ENCODE measurements at regions of chr9 and their contacts with region 1.

Region 1: GRCh38 chr9:34178520-34179212 is at the start of gene UBAP1:
- DNase-seq: peak; percentile 89 to 98 (median 95)
- ATAC-seq: peak; percentile 98
- H3K4me3 ChIP-seq: peak within 1 kb of the TSS; percentile 88 to 93
- H3K4me3 Mint-ChIP-seq: peak within 1 kb of the TSS; percentile 97
- H3K27ac ChIP-seq: peak within 1 kb of the TSS; percentile 92 to 96
- H3K27ac Mint-ChIP-seq: peak within 1 kb of the TSS; percentile 98
- H3K4me1 ChIP-seq: peaks cover 9% of the 10 kb centered on the region
- H3K4me1 Mint-ChIP-seq: peaks cover 24% of the 10 kb centered on the region
- H3K27me3 ChIP-seq: no peaks in the 10 kb centered on the region
- H3K27me3 Mint-ChIP-seq: no peaks in the 10 kb centered on the region
- CTCF ChIP-seq: no peak
- total RNA-seq, gene UBAP1: 70.9 to 73.2 TPM

Region 2: DNA sequence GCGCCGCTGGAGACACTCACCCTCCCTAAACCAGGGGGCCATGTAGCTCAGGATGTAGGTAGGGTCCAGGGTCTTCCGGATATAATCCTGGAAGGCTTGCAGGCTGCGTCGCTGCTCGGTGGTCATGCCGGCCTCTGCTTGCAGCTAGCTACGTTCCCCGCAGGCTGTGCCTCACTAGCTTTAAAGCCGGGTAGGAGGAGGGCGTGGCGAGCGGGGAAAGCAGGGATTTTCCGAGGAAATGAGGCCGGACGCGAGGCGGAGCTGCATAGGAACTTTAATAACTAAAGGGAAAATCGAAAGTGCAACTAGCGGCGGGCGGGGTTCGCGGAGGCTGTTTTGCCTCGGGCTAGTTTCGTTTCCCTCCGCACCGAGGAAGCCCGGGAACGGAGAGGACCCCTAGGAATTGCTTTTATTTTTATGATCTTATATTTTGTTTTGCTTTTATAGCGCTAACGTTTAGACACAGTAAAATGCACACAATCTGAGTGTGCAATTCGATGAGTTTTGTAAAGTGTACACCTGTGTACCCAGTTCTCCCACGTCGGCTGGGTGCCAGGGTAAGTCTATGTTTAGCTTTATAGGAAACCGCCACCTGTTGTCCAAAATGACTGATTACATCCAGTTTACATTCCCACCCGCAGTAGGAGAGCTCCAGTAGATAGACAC is 1652.5 kb before region 1 on chr9 and contains the start of gene RIGI:
- CTCF ChIA-PET with region 1: no interaction called
- POLR2A ChIA-PET with region 1: no interaction called
- intact Hi-C with region 1: loop called in 1 of 2 experiments (anchors 5 kb)
- DNase-seq: peak; percentile 47 to 94 (median 80)
- ATAC-seq: peak; percentile 79
- H3K4me3 ChIP-seq: peak within 1 kb of the TSS; percentile 79 to 85
- H3K4me3 Mint-ChIP-seq: peak within 1 kb of the TSS; percentile 98
- H3K27ac ChIP-seq: peak within 1 kb of the TSS; percentile 85 to 86
- H3K27ac Mint-ChIP-seq: peak within 1 kb of the TSS; percentile 98
- H3K4me1 ChIP-seq: peaks cover 22% of the 10 kb centered on the region
- H3K4me1 Mint-ChIP-seq: peaks cover 55% of the 10 kb centered on the region
- H3K27me3 ChIP-seq: no peaks in the 10 kb centered on the region
- H3K27me3 Mint-ChIP-seq: no peaks in the 10 kb centered on the region
- CTCF ChIP-seq: peak; percentile 60
- total RNA-seq, gene RIGI: 3.4 to 3.9 TPM

Region 3: DNA sequence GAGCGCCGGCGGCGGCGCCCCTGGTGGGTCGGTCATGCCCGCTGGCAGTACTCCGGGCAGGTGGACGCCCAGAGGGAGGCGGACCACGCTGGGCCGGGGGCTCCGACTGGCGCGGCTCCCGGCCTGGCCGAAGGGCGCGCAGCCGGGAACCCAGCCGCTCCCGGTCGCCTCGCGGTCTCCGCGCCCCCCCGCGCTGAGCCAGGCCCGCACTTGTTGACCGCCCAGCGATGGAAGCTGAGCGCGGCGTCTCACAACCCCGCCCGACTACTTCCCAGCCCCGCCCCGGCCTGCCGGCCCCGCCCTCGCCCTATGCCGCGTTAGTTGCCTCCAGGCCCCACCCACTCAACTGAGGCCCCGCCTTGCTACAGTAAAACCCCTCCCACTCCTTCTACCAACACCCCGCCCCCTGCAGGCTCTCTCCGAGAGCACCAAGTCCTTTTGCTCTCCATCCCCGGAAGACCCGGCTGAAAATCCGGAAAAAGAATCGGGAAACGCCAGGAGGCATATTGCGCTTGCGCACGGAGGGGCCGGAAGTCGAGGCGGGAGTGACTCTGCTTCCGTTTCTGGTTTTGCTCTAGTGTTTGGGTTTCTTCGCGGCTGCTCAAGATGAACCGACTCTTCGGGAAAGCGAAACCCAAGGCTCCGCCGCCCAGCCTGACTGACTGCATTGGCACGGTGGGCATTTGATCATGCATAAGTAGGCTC is 914.0 kb before region 1 on chr9 and contains the starts of genes BAG1 and CHMP5:
- CTCF ChIA-PET with region 1: no interaction called
- POLR2A ChIA-PET with region 1: no interaction called
- intact Hi-C with region 1: loop called (anchors 5 to 10 kb)
- DNase-seq: peak; percentile 99 to 100 (median 100)
- ATAC-seq: peak; percentile 97
- H3K4me3 ChIP-seq: peak within 1 kb of the TSS; percentile 69 to 98
- H3K4me3 Mint-ChIP-seq: peak within 1 kb of the TSS; percentile 96
- H3K27ac ChIP-seq: peak within 1 kb of the TSS; percentile 74 to 94
- H3K27ac Mint-ChIP-seq: peak within 1 kb of the TSS; percentile 97
- H3K4me1 ChIP-seq: peaks cover 21% of the 10 kb centered on the region
- H3K4me1 Mint-ChIP-seq: peaks cover 62% of the 10 kb centered on the region
- H3K27me3 ChIP-seq: no peaks in the 10 kb centered on the region
- H3K27me3 Mint-ChIP-seq: no peaks in the 10 kb centered on the region
- CTCF ChIP-seq: no peak
- total RNA-seq, gene BAG1: 56.8 to 64.3 TPM
- total RNA-seq, gene CHMP5: 13.4 to 14.2 TPM

Region 4: GRCh38 chr9:34126207-34127034 is 52.2 kb before region 1 on chr9 and contains the start of gene DCAF12:
- CTCF ChIA-PET with region 1: no interaction called
- POLR2A ChIA-PET with region 1: interaction called, 8 read pairs
- intact Hi-C with region 1: loop called (anchors 1 to 2 kb)
- DNase-seq: peak; percentile 82 to 96 (median 90)
- ATAC-seq: peak; percentile 96
- H3K4me3 ChIP-seq: peak within 1 kb of the TSS; percentile 89 to 96
- H3K4me3 Mint-ChIP-seq: peak within 1 kb of the TSS; percentile 98
- H3K27ac ChIP-seq: peak within 1 kb of the TSS; percentile 79 to 92
- H3K27ac Mint-ChIP-seq: peak within 1 kb of the TSS; percentile 97
- H3K4me1 ChIP-seq: peaks cover 39% of the 10 kb centered on the region
- H3K4me1 Mint-ChIP-seq: peaks cover 49% of the 10 kb centered on the region
- H3K27me3 ChIP-seq: no peaks in the 10 kb centered on the region
- H3K27me3 Mint-ChIP-seq: no peaks in the 10 kb centered on the region
- CTCF ChIP-seq: no peak
- total RNA-seq, gene DCAF12: 4.0 to 4.1 TPM

Region 5: DNA sequence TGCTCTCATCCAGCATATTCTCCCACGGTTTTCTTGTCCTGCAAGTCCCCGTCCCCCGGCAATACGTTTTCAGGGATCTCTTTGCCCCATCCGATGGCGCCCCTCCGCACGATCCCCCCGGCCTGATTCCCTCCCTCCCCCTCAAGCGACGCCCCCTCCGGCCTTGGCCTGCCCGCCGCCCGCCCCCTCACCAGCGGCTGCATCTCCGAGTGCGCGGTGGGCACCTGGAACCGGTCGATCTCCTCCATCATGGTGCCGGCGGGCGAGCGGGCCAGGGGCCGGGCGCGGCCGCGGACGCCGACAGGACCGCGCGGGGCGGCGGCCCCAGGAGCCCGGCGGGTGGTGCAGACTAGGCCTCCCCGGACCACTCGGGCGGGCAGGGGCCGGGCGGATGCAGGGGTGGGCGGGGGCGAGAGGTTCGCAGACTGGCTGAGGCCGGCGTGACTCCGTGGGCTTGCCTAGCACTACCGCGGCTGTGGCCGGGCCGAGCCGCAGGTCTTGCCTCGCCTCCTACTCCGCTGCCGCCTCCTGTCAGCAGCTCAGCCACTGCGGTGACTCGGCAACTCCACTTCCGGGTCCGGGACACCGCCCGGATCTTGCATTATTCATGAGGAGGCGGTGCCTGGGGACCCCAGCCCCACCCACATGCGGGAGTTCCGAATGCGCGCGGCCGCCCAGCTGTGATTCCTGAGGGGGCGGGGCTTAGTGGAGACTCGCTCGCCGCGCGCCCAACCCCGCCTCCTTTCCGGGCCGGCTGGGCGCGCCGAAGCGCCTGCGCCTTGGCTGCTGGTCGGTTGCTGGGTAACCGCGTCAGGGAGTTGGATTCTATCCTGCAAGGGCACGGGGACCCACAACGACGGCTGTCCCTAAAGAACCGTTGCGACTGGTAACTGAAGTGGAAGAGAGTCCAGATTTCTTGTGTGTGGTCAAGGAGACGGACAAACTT is 279.6 kb after region 1 on chr9 and contains the starts of genes DNAI1 and FAM219A:
- CTCF ChIA-PET with region 1: no interaction called
- POLR2A ChIA-PET with region 1: no interaction called
- intact Hi-C with region 1: loop called in 1 of 2 experiments (anchors 2 kb)
- DNase-seq: peak; percentile 98 to 99 (median 99)
- ATAC-seq: peak; percentile 96
- H3K4me3 ChIP-seq: peak within 1 kb of the TSS; percentile 61 to 67
- H3K4me3 Mint-ChIP-seq: peak within 1 kb of the TSS; percentile 91
- H3K27ac ChIP-seq: peak within 1 kb of the TSS in 1 of 2 experiments; percentile 29
- H3K27ac Mint-ChIP-seq: peak within 1 kb of the TSS; percentile 46
- H3K4me1 ChIP-seq: peaks cover 14% of the 10 kb centered on the region
- H3K4me1 Mint-ChIP-seq: peaks cover 30% of the 10 kb centered on the region
- H3K27me3 ChIP-seq: no peaks in the 10 kb centered on the region
- H3K27me3 Mint-ChIP-seq: no peaks in the 10 kb centered on the region
- CTCF ChIP-seq: no peak
- total RNA-seq, gene DNAI1: not detected
- total RNA-seq, gene FAM219A: 5.5 to 5.9 TPM

Measured in CD8-positive, alpha-beta T cell (primary cell).